Gastrocnemius medialis (tissue), 4 donors: ENCODE measurements at regions of chr19 and their contacts with region 1.

Region 1: DNA sequence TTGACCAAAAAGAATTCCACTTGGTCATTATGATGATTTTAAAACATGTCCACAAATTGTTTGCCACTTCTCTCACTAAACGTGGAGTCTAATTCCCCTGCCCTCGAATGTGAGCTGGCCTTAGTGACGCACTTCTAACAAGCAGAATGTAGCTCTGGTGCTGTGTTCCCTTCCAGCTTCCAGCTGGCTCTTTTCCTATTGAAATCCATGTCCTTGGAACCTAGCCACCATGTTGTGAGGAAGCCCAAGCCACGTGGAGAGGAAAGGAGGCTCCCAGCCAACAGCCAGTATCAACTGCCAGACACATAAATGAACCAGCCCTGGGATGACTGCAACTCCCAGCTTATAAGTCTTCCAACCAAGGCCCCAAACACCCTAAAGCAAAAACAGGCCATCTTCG is 23.6 kb upstream of the CEBPA start:
- DNase-seq: peak; percentile 79 to 94
- ATAC-seq: peak; percentile 99
- H3K4me3 ChIP-seq: no peak overlapping the region
- H3K27ac ChIP-seq: peak overlapping the region; percentile 75 to 84 (median 79)
- H3K4me1 ChIP-seq: peaks cover 12 to 27% of the 10 kb centered on the region in 2 donors
- H3K27me3 ChIP-seq: no peaks in the 10 kb centered on the region
- CTCF ChIP-seq: no peak
- POLR2A ChIP-seq: no peak

Region 2: GRCh38 chr19:32914879-32915660 is 410.9 kb before region 1 on chr19:
- in situ Hi-C with region 1: no loop called
- intact Hi-C with region 1: no loop called
- DNase-seq: no peak
- ATAC-seq: no peak
- H3K4me3 ChIP-seq: no peak overlapping the region
- H3K27ac ChIP-seq: no peak overlapping the region
- H3K4me1 ChIP-seq: no peaks in the 10 kb centered on the region
- H3K27me3 ChIP-seq: no peaks in the 10 kb centered on the region
- CTCF ChIP-seq: no peak
- POLR2A ChIP-seq: no peak

Region 3: GRCh38 chr19:33311326-33311682 is 14.6 kb before region 1 on chr19:
- in situ Hi-C with region 1: no loop called
- intact Hi-C with region 1: loop called (anchors 2 kb)
- DNase-seq: no peak
- ATAC-seq: peak; percentile 14 to 35
- H3K4me3 ChIP-seq: no peak overlapping the region
- H3K27ac ChIP-seq: peak overlapping the region in 3 of 4 donors; percentile 40 to 73 (median 65)
- H3K4me1 ChIP-seq: peaks cover 20 to 23% of the 10 kb centered on the region in 2 donors
- H3K27me3 ChIP-seq: no peaks in the 10 kb centered on the region
- CTCF ChIP-seq: peak in 4 of 5 experiments; percentile 13 to 62 (median 53)
- POLR2A ChIP-seq: no peak

Region 4: DNA sequence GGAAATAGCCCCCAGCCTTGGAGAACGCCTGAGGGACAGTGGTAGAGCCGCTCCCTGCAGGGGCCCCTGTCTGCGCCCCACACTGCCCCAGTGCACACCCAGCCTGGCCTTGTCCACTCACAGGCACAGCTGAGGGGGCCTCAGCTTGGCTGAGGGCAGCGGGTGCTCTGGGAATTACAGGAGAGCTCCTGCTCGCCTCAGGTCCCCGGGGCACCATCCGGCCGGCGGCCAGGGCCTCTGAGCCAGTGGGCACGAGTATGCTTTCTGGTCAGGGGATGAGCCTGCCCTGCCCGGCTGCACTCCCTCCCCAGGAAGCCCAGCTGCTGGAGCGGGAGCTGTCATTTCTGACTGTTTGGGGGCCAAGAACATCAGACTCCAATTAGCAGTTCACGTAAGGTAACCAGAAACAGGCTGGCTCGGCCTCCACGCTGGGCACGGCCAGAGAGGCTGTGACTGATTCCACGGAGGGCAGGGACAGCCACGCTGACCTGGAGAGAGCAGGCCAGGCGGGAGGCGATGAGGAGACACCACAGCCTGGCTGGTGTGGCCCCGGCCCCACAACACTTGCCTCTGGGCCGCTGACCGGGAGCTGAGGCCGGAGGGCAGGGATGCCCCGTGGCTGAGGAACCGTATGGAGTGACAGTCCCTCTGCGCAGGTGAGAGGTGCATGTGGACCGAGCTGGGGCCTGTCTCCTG is 63.0 kb after region 1 on chr19:
- in situ Hi-C with region 1: no loop called
- intact Hi-C with region 1: loop called (anchors 5 kb)
- DNase-seq: peak in 1 of 2 donors; percentile 82
- ATAC-seq: peak; percentile 40 to 63
- H3K4me3 ChIP-seq: peak overlapping the region in 1 of 4 donors; percentile 10
- H3K27ac ChIP-seq: peak overlapping the region; percentile 79 to 87 (median 84)
- H3K4me1 ChIP-seq: peaks cover 77% of the 10 kb centered on the region in 2 donors
- H3K27me3 ChIP-seq: no peaks in the 10 kb centered on the region
- CTCF ChIP-seq: no peak
- POLR2A ChIP-seq: no peak

Region 5: DNA sequence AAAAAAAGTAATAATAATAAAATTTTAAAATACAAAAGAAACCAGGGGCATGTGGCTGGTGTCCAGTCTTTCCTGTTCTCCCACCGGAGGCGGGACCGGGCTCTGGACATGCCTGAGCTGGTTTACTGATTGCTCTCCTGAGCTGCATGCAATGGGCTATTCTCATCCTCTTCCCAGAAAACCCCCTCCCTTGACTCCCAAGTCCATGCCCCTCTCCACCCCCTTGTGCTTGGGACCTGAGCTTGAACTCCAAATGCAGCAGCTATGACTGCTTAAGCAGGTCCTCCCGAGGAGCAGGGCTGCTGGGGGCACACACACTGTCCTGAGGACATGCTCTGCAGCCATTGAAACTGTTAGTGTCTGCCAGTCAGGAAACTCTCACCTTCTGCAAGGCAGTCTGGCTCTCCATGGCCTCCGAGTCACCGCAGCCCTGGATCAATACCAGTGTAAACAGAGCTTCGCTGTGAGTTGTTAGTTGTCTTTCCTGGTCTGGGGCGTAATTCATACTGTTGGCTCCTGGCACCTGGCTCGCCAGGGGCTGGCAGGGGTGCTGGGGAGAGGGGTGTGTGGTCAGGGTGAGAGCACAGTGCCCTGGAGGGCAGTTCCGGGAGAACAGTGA is 254.2 kb after region 1 on chr19:
- in situ Hi-C with region 1: no loop called
- intact Hi-C with region 1: no loop called
- DNase-seq: no peak
- ATAC-seq: no peak
- H3K4me3 ChIP-seq: no peak overlapping the region
- H3K27ac ChIP-seq: no peak overlapping the region
- H3K4me1 ChIP-seq: no peaks in the 10 kb centered on the region
- H3K27me3 ChIP-seq: no peaks in the 10 kb centered on the region
- CTCF ChIP-seq: no peak
- POLR2A ChIP-seq: no peak